ENCODE measurements at regions of chr17 and their contacts with region 1.

Region 1: GRCh38 chr17:75827252-75828115 is 16.7 kb downstream of the UNC13D start:
- DNase-seq: no peak
- H3K4me3 ChIP-seq: peak overlapping the region; percentile 48 to 53 (median 49)
- H3K27ac ChIP-seq: peak overlapping the region; percentile 73 to 84 (median 78)
- H3K4me1 ChIP-seq: peaks cover 28 to 40% (median 32%) of the 10 kb centered on the region in 4 donors
- H3K27me3 ChIP-seq: no peaks in the 10 kb centered on the region
- CTCF ChIP-seq: peak; percentile 69 to 78 (median 71)
- EP300 ChIP-seq: no peak
- POLR2A ChIP-seq: no peak

Region 2: GRCh38 chr17:75764711-75765421 is 62.6 kb before region 1 on chr17 and contains the start of gene GALK1:
- intact Hi-C with region 1: loop called (anchors 10 kb)
- DNase-seq: no peak
- H3K4me3 ChIP-seq: peak within 1 kb of the TSS; percentile 71 to 91 (median 77)
- H3K27ac ChIP-seq: peak within 1 kb of the TSS; percentile 83 to 93 (median 90)
- H3K4me1 ChIP-seq: peaks cover 10 to 30% (median 26%) of the 10 kb centered on the region in 4 donors
- H3K27me3 ChIP-seq: no peaks in the 10 kb centered on the region
- CTCF ChIP-seq: peak; percentile 48 to 75 (median 65)
- EP300 ChIP-seq: no peak
- POLR2A ChIP-seq: peak; percentile 47
- total RNA-seq, gene GALK1: 16.9 to 34.1 (median 24.4) TPM

Region 3: GRCh38 chr17:75795820-75796607 is 31.5 kb before region 1 on chr17:
- intact Hi-C with region 1: no loop called
- DNase-seq: no peak
- H3K4me3 ChIP-seq: no peak overlapping the region
- H3K27ac ChIP-seq: no peak overlapping the region
- H3K4me1 ChIP-seq: peaks cover 0 to 11% (median 5%) of the 10 kb centered on the region in 4 donors
- H3K27me3 ChIP-seq: no peaks in the 10 kb centered on the region
- CTCF ChIP-seq: no peak
- EP300 ChIP-seq: no peak
- POLR2A ChIP-seq: no peak

Measured in esophagus muscularis mucosa (tissue), 4 donors.